WTC11 (cell line): ENCODE measurements at regions of chr1 and their contacts with region 1.

Region 1: DNA sequence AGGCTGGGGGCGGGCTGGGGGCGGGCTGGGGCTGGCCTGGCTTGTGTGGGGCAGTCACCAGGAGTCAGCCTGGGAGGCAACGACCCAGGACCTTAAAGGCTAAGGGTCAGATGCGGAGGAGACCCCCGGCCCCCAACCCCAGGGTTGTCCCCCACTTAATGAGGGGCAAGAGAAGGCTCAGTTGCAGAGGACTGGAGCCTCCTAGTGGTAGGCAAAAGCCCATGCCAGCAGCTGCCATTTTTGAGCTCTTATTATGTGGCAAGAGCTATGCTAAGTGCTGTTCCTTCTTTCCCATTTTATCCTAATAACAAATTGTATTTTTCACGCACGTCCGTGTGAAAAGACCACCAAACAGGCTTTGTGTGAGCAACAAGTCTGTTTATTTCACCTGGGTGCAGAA is 8.0 kb downstream of the KIAA1614 start:
- DNase-seq: no peak
- ATAC-seq: no peak
- H3K4me3 Mint-ChIP-seq: no peak overlapping the region
- H3K27ac Mint-ChIP-seq: no peak overlapping the region
- H3K4me1 Mint-ChIP-seq: peaks cover 48% of the 10 kb centered on the region
- H3K27me3 Mint-ChIP-seq: peaks cover under 1% of the 10 kb centered on the region; the same call in 1 of the 2 replicates
- CTCF ChIP-seq: peak; percentile 33

Region 2: GRCh38 chr1:180898441-180899219 is 22.1 kb before region 1 on chr1:
- CTCF ChIA-PET with region 1: interaction called, 17 read pairs
- POLR2A ChIA-PET with region 1: no interaction called
- DNase-seq: no peak
- ATAC-seq: peak; percentile 71
- H3K4me3 Mint-ChIP-seq: no peak overlapping the region
- H3K27ac Mint-ChIP-seq: no peak overlapping the region
- H3K4me1 Mint-ChIP-seq: peaks cover 24% of the 10 kb centered on the region
- H3K27me3 Mint-ChIP-seq: no peaks in the 10 kb centered on the region; the same call in 1 of the 2 replicates
- CTCF ChIP-seq: no peak

Region 3: DNA sequence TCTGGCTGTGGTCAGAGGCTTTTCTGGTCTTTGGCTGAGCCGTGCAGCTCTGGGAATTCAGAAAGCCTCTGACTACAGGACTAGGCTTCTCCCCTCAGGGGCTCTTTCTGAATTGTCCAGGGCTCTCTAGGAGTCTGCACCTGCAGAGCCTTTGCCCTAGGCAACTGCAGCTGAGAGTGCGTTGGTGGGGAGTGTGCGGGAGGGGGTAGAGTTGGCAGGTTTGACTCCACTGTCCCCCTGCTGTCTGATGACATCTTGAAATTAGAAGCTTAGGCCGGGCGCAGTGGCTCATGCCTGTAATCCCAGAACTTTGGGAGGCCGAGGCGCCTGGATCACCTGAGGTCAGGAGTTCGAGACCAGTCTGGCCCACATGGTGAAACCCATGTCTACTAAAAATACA is 24.8 kb after region 1 on chr1:
- CTCF ChIA-PET with region 1: interaction called, 11 read pairs
- POLR2A ChIA-PET with region 1: interaction called, 3 read pairs
- DNase-seq: no peak
- ATAC-seq: no peak
- H3K4me3 Mint-ChIP-seq: no peak overlapping the region
- H3K27ac Mint-ChIP-seq: no peak overlapping the region
- H3K4me1 Mint-ChIP-seq: peaks cover 12% of the 10 kb centered on the region
- H3K27me3 Mint-ChIP-seq: no peaks in the 10 kb centered on the region
- CTCF ChIP-seq: no peak

Region 4: DNA sequence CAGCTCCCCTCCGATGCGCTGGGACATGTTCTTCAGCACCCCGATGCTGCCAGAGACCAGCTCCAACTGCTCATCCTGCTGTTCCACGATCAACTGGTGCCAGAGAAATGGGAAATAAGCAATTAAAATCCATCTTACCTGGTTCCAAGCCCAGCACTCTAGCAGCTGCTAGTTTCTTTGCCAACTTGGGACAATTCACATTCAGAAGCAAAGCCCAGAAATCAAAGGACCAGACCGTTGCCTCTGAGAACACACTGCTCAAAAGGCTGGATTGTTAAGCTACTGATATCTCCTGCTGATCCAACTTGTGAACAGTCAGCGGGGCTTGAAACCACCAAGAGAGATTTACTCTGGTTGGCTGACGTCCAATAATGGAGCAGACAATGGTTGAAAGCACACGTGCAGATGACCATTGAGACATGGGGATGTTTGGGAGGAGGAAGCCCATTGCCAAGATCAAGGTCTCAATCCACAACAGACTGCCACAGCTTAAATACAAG is 67.6 kb after region 1 on chr1:
- CTCF ChIA-PET with region 1: no interaction called
- POLR2A ChIA-PET with region 1: no interaction called
- DNase-seq: no peak
- ATAC-seq: no peak
- H3K4me3 Mint-ChIP-seq: no peak overlapping the region
- H3K27ac Mint-ChIP-seq: peak overlapping the region; percentile 50; the same call in 1 of the 2 replicates
- H3K4me1 Mint-ChIP-seq: no peaks in the 10 kb centered on the region
- H3K27me3 Mint-ChIP-seq: no peaks in the 10 kb centered on the region
- CTCF ChIP-seq: no peak